ENCODE measurements at regions of chr1 and their contacts with region 1.

Region 1: GRCh38 chr1:240027059-240027462 is 64.6 kb upstream of the FMN2 start:
- DNase-seq: peak; percentile 79

Region 2: DNA sequence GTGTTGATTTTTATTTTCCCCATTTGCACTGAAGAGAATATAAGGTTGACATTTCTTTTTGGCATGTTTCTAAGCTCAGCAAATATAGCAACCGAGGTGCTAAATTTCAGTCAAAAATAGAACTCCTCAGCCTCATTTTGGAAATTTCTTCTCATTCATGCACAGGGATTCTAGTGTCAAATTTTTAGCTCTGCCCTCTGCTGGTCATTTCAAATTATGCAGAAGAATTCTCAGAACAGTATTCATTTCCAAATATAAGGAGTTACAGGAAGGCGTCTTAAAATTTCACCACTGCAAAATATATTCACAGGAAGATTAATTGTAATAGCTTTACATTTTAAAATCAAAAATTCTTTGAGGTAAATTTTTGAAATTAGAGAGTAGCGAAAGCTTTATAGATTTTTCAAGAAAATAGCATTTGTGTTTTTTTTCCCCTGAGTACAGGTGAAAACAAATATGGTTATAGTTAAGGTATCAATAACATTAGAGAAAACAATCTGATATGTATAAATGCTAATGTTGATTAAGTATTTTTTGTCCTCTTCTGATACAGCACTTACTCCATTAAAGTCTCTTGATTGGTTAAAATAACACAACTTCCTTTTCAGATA is 122.5 kb after region 1 on chr1:
- in situ Hi-C with region 1: loop called (anchors 25 kb)
- DNase-seq: peak; percentile 66

Measured in ACHN (cell line).